ENCODE measurements at regions of chr18 and their contacts with region 1.

Region 1: DNA sequence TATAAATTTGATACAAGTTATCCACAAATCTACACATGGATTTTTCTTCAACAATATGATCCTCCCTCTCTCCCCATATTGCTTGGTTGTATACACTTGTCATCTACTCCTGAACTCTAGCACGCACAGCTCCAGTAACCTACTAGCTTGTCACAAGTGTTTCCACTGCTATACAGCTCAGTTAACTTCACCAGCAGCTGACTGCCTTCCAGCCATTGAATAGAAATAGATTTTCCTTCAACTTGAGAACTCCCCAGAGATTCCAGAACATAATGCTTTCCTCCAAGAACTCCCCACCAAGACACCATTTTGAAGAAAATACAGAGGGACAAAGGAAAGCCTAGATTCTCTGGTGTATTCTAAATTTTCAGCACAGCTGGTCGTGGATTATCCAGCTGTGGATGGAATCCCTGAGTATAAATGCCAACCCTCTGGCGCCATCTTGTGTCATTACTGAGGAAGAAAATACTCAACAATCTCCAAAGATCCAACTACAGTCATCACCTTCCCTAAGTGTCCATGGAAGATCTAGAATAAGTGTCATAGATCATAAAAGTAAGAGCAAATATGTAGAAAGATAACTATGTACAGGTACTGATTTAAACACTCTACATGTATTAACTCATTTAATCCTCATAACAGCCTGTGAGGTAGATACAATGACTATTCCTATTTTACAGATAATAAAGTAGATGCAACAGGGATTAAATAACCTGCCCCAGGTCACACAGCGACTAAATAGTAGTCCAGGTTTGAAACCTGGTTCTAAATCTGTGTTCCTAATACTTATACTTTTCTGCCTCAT is 156.7 kb downstream of the ARHGAP28 start:
- DNase-seq: no peak
- ATAC-seq: peak; percentile 83

Region 2: GRCh38 chr18:5868218-5869115 is 1017.7 kb before region 1 on chr18:
- intact Hi-C with region 1: loop called (anchors 5 kb)
- DNase-seq: peak; percentile 48
- ATAC-seq: peak; percentile 90

Region 3: GRCh38 chr18:6543330-6543908 is 342.8 kb before region 1 on chr18:
- intact Hi-C with region 1: loop called (anchors 5 kb)
- DNase-seq: no peak
- ATAC-seq: peak; percentile 39

Region 4: DNA sequence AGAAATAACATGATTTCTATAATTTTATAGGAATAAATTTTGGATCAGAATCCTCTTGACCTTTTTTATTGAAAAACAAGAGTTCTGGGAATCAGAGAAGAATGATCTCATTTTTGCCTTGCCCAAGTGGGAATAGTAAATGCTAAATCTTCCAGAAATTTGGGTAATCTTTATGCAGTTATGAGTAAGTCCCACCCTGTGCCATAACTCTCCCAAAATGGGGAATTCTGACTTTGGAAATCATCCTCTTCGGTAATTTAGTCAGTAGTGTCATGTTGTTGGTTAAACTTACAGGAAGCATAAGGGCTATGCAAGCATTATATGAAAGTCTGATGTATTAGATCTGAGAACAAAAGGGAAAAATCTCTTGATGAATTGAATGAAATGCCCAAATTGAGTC is 177.3 kb before region 1 on chr18:
- intact Hi-C with region 1: no loop called
- DNase-seq: no peak
- ATAC-seq: no peak

Measured in Right ventricle myocardium superior (tissue), 1 donor.